Activated B cell treated with CpG ODN at 0.5 μM for 24 hours (primary cell): ENCODE measurements at regions of chr17 and their contacts with region 1.

Region 1: DNA sequence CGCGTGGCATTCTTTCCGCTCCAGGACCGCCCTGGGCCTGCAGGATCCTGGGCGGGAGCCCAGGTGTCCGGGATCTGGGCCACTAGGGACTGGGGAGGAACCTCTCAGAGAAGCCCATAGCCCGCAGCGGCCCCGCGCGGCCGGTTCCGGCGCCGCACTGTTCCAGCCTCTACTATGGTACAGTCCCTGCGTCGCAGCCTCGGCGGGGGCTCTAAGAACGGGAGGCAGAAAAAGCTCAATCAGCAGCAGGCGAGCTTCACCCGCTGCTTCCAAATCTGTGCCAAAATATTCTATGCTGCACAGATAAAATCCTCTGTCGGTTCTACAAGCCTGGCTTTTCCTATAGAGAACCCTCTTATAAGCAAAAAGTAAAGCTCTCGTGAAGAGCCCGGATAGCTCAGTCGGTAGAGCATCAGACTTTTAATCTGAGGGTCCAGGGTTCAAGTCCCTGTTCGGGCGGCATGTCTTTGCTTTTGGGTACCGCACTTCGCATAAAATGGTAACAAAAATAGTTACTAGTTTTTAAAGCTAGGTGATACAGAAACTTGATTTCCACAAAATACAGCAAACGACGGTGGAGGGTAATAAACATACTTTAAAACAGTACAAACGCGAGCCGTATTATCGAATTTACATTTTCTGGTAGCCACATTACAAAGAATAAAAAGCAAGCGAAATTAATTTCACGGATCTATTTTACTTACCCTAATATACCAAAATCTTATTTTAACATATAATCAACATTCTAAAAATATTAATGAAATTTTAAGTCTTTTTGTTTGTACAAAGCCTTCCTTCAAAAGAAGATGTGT is 661 bp upstream of the ALOXE3 start:
- DNase-seq: peak; percentile 81
- ATAC-seq: peak; percentile 68
- H3K4me3 Mint-ChIP-seq: peak overlapping the region; percentile 93
- H3K27ac Mint-ChIP-seq: peak overlapping the region; percentile 96
- H3K4me1 Mint-ChIP-seq: peaks cover 58% of the 10 kb centered on the region
- H3K27me3 Mint-ChIP-seq: peaks cover 56% of the 10 kb centered on the region
- CTCF ChIP-seq: peak; percentile 26

Region 2: DNA sequence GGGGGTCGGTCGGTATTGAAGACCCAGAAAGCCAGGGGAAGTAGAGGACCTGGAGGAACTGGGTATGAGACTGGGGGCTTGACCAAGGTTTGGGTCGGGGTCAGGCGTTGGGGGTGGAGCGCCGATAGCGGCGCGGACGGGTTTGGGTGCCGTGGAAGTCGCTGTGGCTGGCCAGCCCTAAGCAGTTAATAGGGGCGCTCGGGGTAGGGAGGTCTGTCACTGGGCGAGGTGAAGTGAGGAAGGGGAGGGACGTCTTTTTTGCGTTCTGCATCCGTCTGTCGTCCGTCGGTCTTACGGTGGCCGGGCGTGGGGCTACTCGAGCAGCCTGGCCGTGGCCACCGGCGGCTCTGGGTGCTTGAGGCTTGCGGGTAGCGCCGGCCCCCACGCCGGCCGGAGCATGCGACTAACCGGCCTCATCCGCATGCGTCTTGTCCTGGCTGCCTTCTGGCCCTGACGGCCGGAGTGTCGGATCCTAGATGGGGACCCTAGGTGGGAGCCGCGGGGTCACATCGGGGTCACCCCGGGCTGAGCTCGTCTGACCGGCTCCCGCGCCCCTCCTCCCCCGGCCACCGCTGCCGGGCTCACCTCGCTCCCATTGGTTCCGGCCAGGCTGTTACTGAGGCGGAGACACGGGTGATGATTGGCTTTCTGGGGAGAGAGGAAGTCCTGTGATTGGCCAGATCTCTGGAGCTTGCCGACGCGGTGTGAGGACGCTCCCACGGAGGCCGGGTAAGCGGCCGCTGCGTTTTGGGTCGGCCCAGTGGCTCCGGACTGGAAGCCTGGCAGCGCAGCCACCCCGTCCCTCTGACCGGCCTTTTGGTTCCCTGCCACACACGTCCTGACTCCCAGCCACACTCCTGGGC is 274.5 kb before region 1 on chr17:
- CTCF ChIA-PET with region 1: no interaction called
- POLR2A ChIA-PET with region 1: interaction called, 10 read pairs
- intact Hi-C with region 1: loop called (anchors 1 kb)
- DNase-seq: peak; percentile 83
- ATAC-seq: peak; percentile 46
- H3K4me3 Mint-ChIP-seq: peak overlapping the region; percentile 98
- H3K27ac Mint-ChIP-seq: peak overlapping the region; percentile 100
- H3K4me1 Mint-ChIP-seq: peaks cover 50% of the 10 kb centered on the region
- H3K27me3 Mint-ChIP-seq: no peaks in the 10 kb centered on the region
- CTCF ChIP-seq: no peak

Region 3: DNA sequence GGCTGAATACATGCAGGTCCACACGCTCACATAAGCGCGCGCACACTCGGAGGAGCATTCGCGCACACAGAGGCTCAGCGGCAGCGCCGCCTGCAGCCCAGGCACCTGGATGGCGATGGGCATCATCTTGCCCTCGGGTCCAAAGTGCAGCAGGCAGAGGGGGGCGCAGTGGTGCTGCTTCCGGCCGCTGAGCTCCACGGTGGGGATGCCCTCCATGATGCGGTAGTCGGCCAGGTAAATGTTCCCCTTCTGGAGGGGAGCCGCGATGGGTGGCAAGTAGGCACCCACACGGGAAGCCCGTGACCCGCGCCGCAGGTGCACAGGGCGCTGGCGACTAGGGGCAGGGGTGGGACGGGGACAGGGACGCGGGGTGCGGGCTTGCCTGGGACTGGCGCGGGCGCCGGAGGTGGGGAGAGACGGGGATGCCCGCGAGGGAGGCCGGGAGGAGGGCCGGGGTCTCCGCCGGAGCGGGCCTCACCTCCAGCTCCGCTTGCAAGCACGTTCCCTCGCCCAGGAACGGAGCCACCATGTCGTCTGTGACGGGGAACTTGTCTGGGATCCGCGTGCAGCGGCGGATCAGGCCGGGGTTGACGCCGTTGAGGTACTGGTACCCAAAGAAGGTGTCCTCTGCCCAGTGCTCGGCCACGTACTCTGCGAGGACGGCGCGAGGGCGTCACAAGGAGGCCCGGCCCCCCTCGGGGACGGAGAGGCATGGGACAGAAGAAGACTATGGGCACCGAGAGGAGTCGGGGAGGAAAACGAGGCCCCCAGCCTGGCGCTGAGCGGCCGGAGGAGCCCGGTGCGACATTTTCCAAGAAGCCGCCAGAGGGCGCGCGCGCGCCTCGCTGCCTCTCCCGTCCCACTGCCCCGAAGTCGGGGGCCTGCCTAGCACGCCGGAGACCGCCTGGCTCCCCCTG is 39.4 kb before region 1 on chr17:
- CTCF ChIA-PET with region 1: interaction called, 33 read pairs
- POLR2A ChIA-PET with region 1: interaction called, 16 read pairs
- intact Hi-C with region 1: loop called (anchors 1 kb)
- DNase-seq: peak; percentile 82
- ATAC-seq: peak; percentile 85
- H3K4me3 Mint-ChIP-seq: peak overlapping the region; percentile 89
- H3K27ac Mint-ChIP-seq: peak overlapping the region; percentile 83
- H3K4me1 Mint-ChIP-seq: peaks cover 17% of the 10 kb centered on the region
- H3K27me3 Mint-ChIP-seq: peaks cover 13% of the 10 kb centered on the region
- CTCF ChIP-seq: no peak

Region 4: DNA sequence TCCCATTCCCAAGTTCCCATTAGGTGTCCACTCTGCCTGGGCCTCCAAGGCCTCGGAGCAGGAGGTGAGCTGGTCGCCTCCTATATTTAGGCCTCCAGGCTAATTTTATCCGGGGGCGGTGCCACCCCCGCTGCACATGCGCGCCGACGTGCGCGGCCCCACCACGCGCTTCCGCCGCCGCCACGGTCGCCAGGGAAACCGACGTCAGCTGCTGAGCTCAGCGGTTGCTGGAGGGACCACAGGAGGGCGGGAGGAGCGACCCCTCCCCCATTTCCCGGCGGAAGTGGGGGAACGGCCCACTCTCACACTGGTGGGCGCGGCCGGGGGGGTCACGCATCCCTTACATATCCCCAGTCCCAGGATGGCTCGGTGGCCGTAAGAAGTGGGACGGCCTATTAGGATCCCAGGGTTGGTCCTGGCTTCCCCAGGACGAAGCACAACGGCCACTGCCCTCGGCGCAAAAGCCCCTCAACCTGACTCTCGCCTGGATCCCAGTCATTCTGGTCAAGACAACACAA is 32.2 kb after region 1 on chr17:
- CTCF ChIA-PET with region 1: interaction called, 14 read pairs
- POLR2A ChIA-PET with region 1: interaction called, 30 read pairs
- intact Hi-C with region 1: loop called (anchors 1 kb)
- DNase-seq: peak; percentile 89
- ATAC-seq: peak; percentile 60
- H3K4me3 Mint-ChIP-seq: peak overlapping the region; percentile 90
- H3K27ac Mint-ChIP-seq: peak overlapping the region; percentile 87
- H3K4me1 Mint-ChIP-seq: peaks cover 31% of the 10 kb centered on the region
- H3K27me3 Mint-ChIP-seq: no peaks in the 10 kb centered on the region
- CTCF ChIP-seq: no peak

Region 5: DNA sequence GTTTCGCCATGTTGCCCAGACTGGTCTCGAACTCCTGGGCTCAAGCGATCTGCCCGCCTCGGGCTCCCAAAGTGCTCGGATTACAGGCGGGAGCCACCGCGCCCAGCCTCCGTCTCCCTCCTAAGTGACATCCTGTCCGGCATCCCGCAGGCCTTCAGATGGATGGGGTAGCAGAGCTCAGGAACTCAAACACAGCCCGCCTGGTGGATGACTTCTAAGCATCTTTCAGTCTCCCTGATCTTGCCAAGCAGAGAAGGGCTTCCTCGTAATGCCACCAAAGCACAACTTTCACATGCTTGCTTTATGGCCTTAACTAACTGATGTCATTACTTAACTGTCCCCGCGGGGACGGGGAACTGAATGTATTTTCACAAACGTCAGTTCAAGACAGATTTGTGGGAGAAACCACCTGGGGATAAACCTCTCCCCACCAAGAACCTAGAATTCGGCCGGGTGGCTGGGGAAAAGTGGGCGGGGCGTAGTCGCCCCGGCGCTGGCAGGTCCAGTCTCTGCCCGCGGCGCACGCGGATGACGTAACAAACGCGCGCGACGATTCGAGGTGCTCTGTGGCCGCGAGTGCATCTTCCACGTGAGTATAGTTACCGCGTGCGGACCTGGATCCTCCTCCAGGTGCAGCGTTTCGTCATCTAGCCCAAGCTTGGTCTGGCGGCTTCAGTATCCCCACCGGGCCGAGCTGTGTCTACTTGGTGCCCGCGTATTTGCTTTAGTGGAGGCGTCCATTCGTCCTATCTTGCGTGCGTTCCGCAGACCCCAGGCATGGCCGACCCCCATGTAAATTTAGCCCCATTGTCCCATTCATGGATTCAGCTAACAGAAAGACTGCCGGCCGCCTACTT is 130.0 kb after region 1 on chr17 and contains the start of gene PFAS:
- CTCF ChIA-PET with region 1: interaction called, 3 read pairs
- POLR2A ChIA-PET with region 1: interaction called, 35 read pairs
- intact Hi-C with region 1: loop called (anchors 1 kb)
- DNase-seq: peak; percentile 99
- ATAC-seq: peak; percentile 47
- H3K4me3 Mint-ChIP-seq: peak within 1 kb of the TSS; percentile 99
- H3K27ac Mint-ChIP-seq: peak within 1 kb of the TSS; percentile 99
- H3K4me1 Mint-ChIP-seq: peaks cover 43% of the 10 kb centered on the region
- H3K27me3 Mint-ChIP-seq: no peaks in the 10 kb centered on the region
- CTCF ChIP-seq: no peak
- total RNA-seq, gene PFAS: 121 and 126 TPM in 2 replicates

Region 6: GRCh38 chr17:8300627-8301242 is 181.8 kb after region 1 on chr17:
- CTCF ChIA-PET with region 1: interaction called, 8 read pairs
- POLR2A ChIA-PET with region 1: interaction called, 17 read pairs
- intact Hi-C with region 1: loop called (anchors 2 kb)
- DNase-seq: peak; percentile 30
- ATAC-seq: peak; percentile 97
- H3K4me3 Mint-ChIP-seq: no peak overlapping the region
- H3K27ac Mint-ChIP-seq: peak overlapping the region; percentile 46
- H3K4me1 Mint-ChIP-seq: peaks cover 8% of the 10 kb centered on the region
- H3K27me3 Mint-ChIP-seq: no peaks in the 10 kb centered on the region
- CTCF ChIP-seq: no peak